Breast epithelium (tissue), 4 donors: ENCODE measurements at regions of chr4 and their contacts with region 1.

Region 1: DNA sequence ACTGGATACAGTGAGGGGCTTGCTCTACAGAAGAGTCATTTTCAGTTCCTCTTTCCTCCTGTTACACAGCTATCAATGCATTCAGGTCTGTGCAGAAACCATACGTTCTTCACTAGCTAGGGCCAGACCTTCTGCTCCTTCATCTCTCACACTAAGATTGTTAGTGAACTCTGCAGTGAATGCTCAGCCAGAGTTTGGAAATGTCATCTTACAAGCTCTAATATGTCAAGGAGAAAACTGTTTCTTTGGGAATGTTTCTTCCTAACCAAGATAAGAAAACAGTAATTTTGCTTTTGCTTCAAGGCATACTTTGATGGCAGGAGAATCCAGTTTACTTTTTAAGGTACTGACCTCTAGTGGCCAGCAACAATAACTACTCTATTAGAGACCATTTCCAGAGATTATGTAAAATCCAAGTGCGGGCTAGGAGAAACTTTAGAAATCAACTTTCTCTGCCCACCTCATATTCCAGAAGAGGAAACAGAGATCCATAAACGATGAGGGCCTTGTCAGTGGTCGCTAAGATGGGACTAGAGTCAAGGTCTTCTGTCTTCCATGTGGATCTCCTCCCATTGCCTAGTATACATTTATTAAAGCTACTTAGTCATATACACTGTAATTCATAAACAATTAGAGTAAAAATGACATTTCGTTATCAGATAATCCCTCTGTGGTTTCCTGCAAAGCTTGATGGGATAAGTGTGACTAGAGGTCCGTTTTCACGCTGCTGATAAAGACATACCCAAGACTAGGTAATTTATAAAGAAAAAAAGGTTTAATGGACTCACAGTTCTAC is 12.1 kb upstream of the CC2D2A start:
- DNase-seq: no peak
- H3K4me3 ChIP-seq: no peak overlapping the region
- H3K27ac ChIP-seq: peak overlapping the region in 1 of 2 donors; percentile 8
- H3K4me1 ChIP-seq: no peaks in the 10 kb centered on the region
- H3K27me3 ChIP-seq: no peaks in the 10 kb centered on the region
- CTCF ChIP-seq: peak; percentile 64 to 80 (median 75)
- POLR2A ChIP-seq: no peak

Region 2: GRCh38 chr4:15231265-15232091 is 226.1 kb before region 1 on chr4:
- intact Hi-C with region 1: loop called (anchors 5 kb)
- DNase-seq: peak; percentile 52 to 60
- H3K4me3 ChIP-seq: no peak overlapping the region
- H3K27ac ChIP-seq: no peak overlapping the region
- H3K4me1 ChIP-seq: no peaks in the 10 kb centered on the region
- H3K27me3 ChIP-seq: no peaks in the 10 kb centered on the region
- CTCF ChIP-seq: peak; percentile 51 to 68 (median 57)
- POLR2A ChIP-seq: no peak

Region 3: DNA sequence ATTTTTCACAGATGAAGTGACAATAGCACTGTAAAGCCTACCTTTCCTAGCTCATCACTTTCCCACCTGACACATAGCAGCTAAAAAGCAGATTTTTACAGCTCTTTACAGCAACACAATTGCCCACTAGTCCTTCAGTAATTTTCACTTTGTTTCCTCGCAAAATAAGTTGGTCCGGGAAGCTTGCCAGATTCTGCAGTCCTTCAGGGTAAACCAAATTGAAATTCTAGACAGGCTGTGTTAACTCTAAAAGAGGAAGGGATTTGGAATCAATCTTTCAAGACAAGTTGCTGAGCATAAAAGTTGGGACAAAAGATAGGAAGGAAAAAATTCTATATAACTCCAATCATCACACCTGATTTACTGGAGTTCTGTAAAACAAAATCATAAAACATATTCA is 21.1 kb before region 1 on chr4:
- intact Hi-C with region 1: no loop called
- DNase-seq: no peak
- H3K4me3 ChIP-seq: no peak overlapping the region
- H3K27ac ChIP-seq: no peak overlapping the region
- H3K4me1 ChIP-seq: no peaks in the 10 kb centered on the region
- H3K27me3 ChIP-seq: no peaks in the 10 kb centered on the region
- CTCF ChIP-seq: no peak
- POLR2A ChIP-seq: no peak

Region 4: GRCh38 chr4:15469402-15470127 is 12.0 kb after region 1 on chr4 and contains the start of gene CC2D2A:
- intact Hi-C with region 1: loop called (anchors 1 kb)
- DNase-seq: no peak
- H3K4me3 ChIP-seq: peak within 1 kb of the TSS; percentile 51 to 66 (median 55)
- H3K27ac ChIP-seq: peak within 1 kb of the TSS; percentile 20 to 38
- H3K4me1 ChIP-seq: no peaks in the 10 kb centered on the region
- H3K27me3 ChIP-seq: no peaks in the 10 kb centered on the region
- CTCF ChIP-seq: no peak
- POLR2A ChIP-seq: no peak
- total RNA-seq, gene CC2D2A: 10.7 to 22.9 (median 14.9) TPM